ENCODE measurements at regions of chr11 and their contacts with region 1.

Region 1: DNA sequence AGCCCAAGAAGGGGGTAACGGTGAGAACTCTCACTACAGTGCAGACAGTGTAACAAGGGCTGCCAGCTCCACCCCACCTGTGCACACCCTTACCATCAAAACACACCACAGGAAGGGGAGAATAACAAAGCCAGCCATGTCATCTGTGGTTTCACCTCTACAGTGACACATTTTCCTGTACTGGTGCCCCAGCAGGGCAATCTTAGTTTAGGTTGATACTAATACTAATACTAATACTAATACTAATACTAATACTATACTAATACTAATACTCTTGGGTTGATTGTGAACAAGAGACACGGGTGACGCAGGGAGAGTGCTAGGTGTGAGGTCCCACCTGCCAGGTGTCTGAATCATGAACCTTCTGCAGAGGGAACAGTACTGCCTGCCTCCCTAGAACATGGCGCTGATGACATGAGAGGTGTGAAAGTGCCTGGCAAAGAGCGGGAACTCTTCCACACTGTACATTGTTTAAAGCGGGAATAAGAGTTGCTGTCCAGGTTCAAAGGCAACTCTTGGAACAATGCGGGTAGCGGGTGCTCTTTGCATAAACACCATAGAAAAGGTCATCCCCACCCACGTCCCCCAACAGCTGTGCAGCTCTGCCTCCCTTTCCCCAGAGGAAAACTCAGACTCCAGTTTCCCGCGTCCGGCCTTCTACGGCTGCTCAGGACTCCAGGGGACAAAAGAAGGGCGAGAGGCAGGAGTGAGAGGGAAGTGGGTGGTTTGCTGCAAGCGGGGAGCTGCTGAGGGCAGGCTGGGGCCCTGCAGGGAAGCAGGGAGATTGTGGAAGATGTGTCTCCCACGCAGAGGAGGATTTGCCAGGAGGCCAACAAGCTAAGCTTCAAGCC is 25.0 kb upstream of the TMPRSS4 start:
- DNase-seq: peak; percentile 38
- ATAC-seq: peak; percentile 87
- H3K4me3 ChIP-seq: no peak overlapping the region
- H3K4me3 Mint-ChIP-seq: peak overlapping the region; percentile 42
- H3K27ac ChIP-seq: peak overlapping the region in 1 of 2 donors; percentile 35
- H3K27ac Mint-ChIP-seq: peak overlapping the region; percentile 88
- H3K4me1 ChIP-seq: peaks cover 32 to 34% of the 10 kb centered on the region in 2 donors
- H3K4me1 Mint-ChIP-seq: peaks cover 39% of the 10 kb centered on the region
- H3K27me3 ChIP-seq: no peaks in the 10 kb centered on the region
- H3K27me3 Mint-ChIP-seq: peaks cover 8% of the 10 kb centered on the region
- CTCF ChIP-seq: no peak

Region 2: GRCh38 chr11:117720061-117720511 is 331.8 kb before region 1 on chr11:
- CTCF ChIA-PET with region 1: no interaction called
- POLR2A ChIA-PET with region 1: no interaction called
- intact Hi-C with region 1: no loop called
- DNase-seq: no peak
- ATAC-seq: no peak
- H3K4me3 ChIP-seq: no peak overlapping the region
- H3K4me3 Mint-ChIP-seq: no peak overlapping the region
- H3K27ac ChIP-seq: no peak overlapping the region
- H3K27ac Mint-ChIP-seq: no peak overlapping the region
- H3K4me1 ChIP-seq: no peaks in the 10 kb centered on the region
- H3K4me1 Mint-ChIP-seq: no peaks in the 10 kb centered on the region
- H3K27me3 ChIP-seq: peaks cover 0 to 9% (median 0%) of the 10 kb centered on the region in 4 experiments
- H3K27me3 Mint-ChIP-seq: peaks cover 22% of the 10 kb centered on the region
- CTCF ChIP-seq: no peak

Region 3: GRCh38 chr11:117807482-117808327 is 244.1 kb before region 1 on chr11:
- CTCF ChIA-PET with region 1: interaction called, 134 read pairs
- POLR2A ChIA-PET with region 1: interaction called, 5 read pairs
- intact Hi-C with region 1: loop called (anchors 1 kb)
- DNase-seq: peak; percentile 80
- ATAC-seq: peak; percentile 81
- H3K4me3 ChIP-seq: no peak overlapping the region
- H3K4me3 Mint-ChIP-seq: no peak overlapping the region
- H3K27ac ChIP-seq: no peak overlapping the region
- H3K27ac Mint-ChIP-seq: no peak overlapping the region
- H3K4me1 ChIP-seq: peaks cover 0 to 9% of the 10 kb centered on the region in 2 donors
- H3K4me1 Mint-ChIP-seq: peaks cover 5% of the 10 kb centered on the region
- H3K27me3 ChIP-seq: peaks cover 0 to 9% (median 0%) of the 10 kb centered on the region in 4 experiments
- H3K27me3 Mint-ChIP-seq: peaks cover 10% of the 10 kb centered on the region
- CTCF ChIP-seq: peak; percentile 97

Region 4: GRCh38 chr11:117837070-117837776 is 214.6 kb before region 1 on chr11:
- CTCF ChIA-PET with region 1: interaction called, 227 read pairs
- POLR2A ChIA-PET with region 1: no interaction called
- intact Hi-C with region 1: no loop called
- DNase-seq: no peak
- ATAC-seq: no peak
- H3K4me3 ChIP-seq: no peak overlapping the region
- H3K4me3 Mint-ChIP-seq: no peak overlapping the region
- H3K27ac ChIP-seq: no peak overlapping the region
- H3K27ac Mint-ChIP-seq: no peak overlapping the region
- H3K4me1 ChIP-seq: no peaks in the 10 kb centered on the region
- H3K4me1 Mint-ChIP-seq: no peaks in the 10 kb centered on the region
- H3K27me3 ChIP-seq: peaks cover 0 to 9% (median 0%) of the 10 kb centered on the region in 4 experiments
- H3K27me3 Mint-ChIP-seq: peaks cover 18% of the 10 kb centered on the region
- CTCF ChIP-seq: no peak

Region 5: GRCh38 chr11:117919781-117920221 is 132.0 kb before region 1 on chr11:
- CTCF ChIA-PET with region 1: interaction called, 12 read pairs
- POLR2A ChIA-PET with region 1: no interaction called
- intact Hi-C with region 1: no loop called
- DNase-seq: no peak
- ATAC-seq: peak; percentile 71
- H3K4me3 ChIP-seq: no peak overlapping the region
- H3K4me3 Mint-ChIP-seq: peak overlapping the region; percentile 10
- H3K27ac ChIP-seq: peak overlapping the region in 1 of 2 donors; percentile 33
- H3K27ac Mint-ChIP-seq: peak overlapping the region; percentile 48
- H3K4me1 ChIP-seq: peaks cover 13 to 14% of the 10 kb centered on the region in 2 donors
- H3K4me1 Mint-ChIP-seq: peaks cover 13% of the 10 kb centered on the region
- H3K27me3 ChIP-seq: no peaks in the 10 kb centered on the region
- H3K27me3 Mint-ChIP-seq: no peaks in the 10 kb centered on the region
- CTCF ChIP-seq: no peak

Region 6: GRCh38 chr11:117979481-117980211 is 72.2 kb before region 1 on chr11:
- CTCF ChIA-PET with region 1: interaction called, 20 read pairs
- POLR2A ChIA-PET with region 1: interaction called, 4 read pairs
- intact Hi-C with region 1: no loop called
- DNase-seq: peak; percentile 74
- ATAC-seq: peak; percentile 71
- H3K4me3 ChIP-seq: no peak overlapping the region
- H3K4me3 Mint-ChIP-seq: peak overlapping the region; percentile 59
- H3K27ac ChIP-seq: peak overlapping the region; percentile 69 to 79
- H3K27ac Mint-ChIP-seq: peak overlapping the region; percentile 79
- H3K4me1 ChIP-seq: peaks cover 33 to 49% of the 10 kb centered on the region in 2 donors
- H3K4me1 Mint-ChIP-seq: peaks cover 65% of the 10 kb centered on the region
- H3K27me3 ChIP-seq: no peaks in the 10 kb centered on the region
- H3K27me3 Mint-ChIP-seq: no peaks in the 10 kb centered on the region
- CTCF ChIP-seq: no peak

Region 7: GRCh38 chr11:118010738-118011461 is 40.9 kb before region 1 on chr11:
- CTCF ChIA-PET with region 1: interaction called, 133 read pairs
- POLR2A ChIA-PET with region 1: interaction called, 54 read pairs
- intact Hi-C with region 1: loop called (anchors 1 kb)
- DNase-seq: peak; percentile 96
- ATAC-seq: peak; percentile 73
- H3K4me3 ChIP-seq: peak overlapping the region in 2 of 5 experiments; percentile 2 to 38
- H3K4me3 Mint-ChIP-seq: peak overlapping the region; percentile 75
- H3K27ac ChIP-seq: peak overlapping the region; percentile 95 to 99
- H3K27ac Mint-ChIP-seq: peak overlapping the region; percentile 99
- H3K4me1 ChIP-seq: peaks cover 99 to 100% of the 10 kb centered on the region in 2 donors
- H3K4me1 Mint-ChIP-seq: peaks cover 100% of the 10 kb centered on the region
- H3K27me3 ChIP-seq: no peaks in the 10 kb centered on the region
- H3K27me3 Mint-ChIP-seq: no peaks in the 10 kb centered on the region
- CTCF ChIP-seq: no peak

Measured in B cell (primary cell).